CD8-positive, alpha-beta T cell (primary cell): ENCODE measurements at regions of chr19 and their contacts with region 1.

Region 1: DNA sequence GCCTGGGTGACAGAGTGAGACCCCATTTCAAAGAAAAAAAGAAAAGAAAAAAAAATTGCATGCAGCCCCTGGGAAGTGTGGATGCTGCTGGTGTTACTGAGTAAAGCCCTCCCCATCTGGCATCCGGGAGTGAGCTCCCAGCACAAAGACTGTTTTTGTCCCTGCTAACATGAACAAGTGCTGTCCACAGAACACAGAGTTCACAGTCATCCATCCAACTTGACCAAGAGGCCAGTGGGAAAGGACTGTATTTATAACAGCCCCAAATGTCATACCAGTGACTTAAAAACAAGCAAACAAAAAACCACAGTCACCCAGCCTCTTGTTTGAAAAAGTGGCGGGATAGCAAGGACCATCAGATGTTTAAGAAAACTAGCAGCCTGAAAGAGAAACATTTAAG is 10.8 kb downstream of the FBXO17 start:
- DNase-seq: no peak
- ATAC-seq: no peak
- H3K4me3 ChIP-seq: no peak overlapping the region
- H3K4me3 Mint-ChIP-seq: no peak overlapping the region
- H3K27ac ChIP-seq: no peak overlapping the region
- H3K27ac Mint-ChIP-seq: no peak overlapping the region
- H3K4me1 ChIP-seq: peaks cover 4% of the 10 kb centered on the region
- H3K4me1 Mint-ChIP-seq: peaks cover 5% of the 10 kb centered on the region
- H3K27me3 ChIP-seq: no peaks in the 10 kb centered on the region
- H3K27me3 Mint-ChIP-seq: peaks cover 17% of the 10 kb centered on the region
- CTCF ChIP-seq: no peak

Region 2: GRCh38 chr19:38949580-38950367 is 15.0 kb before region 1 on chr19:
- CTCF ChIA-PET with region 1: interaction called, 13 read pairs
- POLR2A ChIA-PET with region 1: no interaction called
- intact Hi-C with region 1: no loop called
- DNase-seq: peak; percentile 42 to 88 (median 80)
- ATAC-seq: peak; percentile 98
- H3K4me3 ChIP-seq: peak overlapping the region in 1 of 2 experiments; percentile 41
- H3K4me3 Mint-ChIP-seq: peak overlapping the region; percentile 64
- H3K27ac ChIP-seq: no peak overlapping the region
- H3K27ac Mint-ChIP-seq: peak overlapping the region; percentile 74
- H3K4me1 ChIP-seq: peaks cover 8% of the 10 kb centered on the region
- H3K4me1 Mint-ChIP-seq: peaks cover 14% of the 10 kb centered on the region
- H3K27me3 ChIP-seq: peaks cover 0 to 2% of the 10 kb centered on the region in 2 experiments
- H3K27me3 Mint-ChIP-seq: peaks cover 25% of the 10 kb centered on the region
- CTCF ChIP-seq: no peak

Region 3: DNA sequence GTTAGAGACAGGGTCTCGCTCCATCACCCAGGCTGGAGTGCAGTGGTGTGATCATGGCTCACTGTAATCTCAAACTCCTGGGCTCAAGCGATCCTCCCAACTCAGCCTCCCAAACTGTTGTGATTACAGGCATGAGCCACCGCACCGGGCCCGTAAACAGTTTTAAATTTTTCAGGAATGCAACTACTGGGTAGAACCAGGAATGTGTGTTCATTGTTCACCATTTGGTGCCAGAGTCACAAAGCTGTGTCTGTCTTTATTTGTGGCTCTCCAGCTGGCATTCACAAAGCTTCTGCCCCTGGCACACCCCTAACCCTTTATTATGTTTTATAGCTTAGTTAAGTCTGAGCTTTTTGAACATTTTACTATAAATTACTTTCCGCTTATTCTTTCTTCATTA is 99.7 kb after region 1 on chr19:
- CTCF ChIA-PET with region 1: no interaction called
- POLR2A ChIA-PET with region 1: no interaction called
- intact Hi-C with region 1: no loop called
- DNase-seq: no peak
- ATAC-seq: no peak
- H3K4me3 ChIP-seq: no peak overlapping the region
- H3K4me3 Mint-ChIP-seq: no peak overlapping the region
- H3K27ac ChIP-seq: no peak overlapping the region
- H3K27ac Mint-ChIP-seq: no peak overlapping the region
- H3K4me1 ChIP-seq: no peaks in the 10 kb centered on the region
- H3K4me1 Mint-ChIP-seq: peaks cover 6% of the 10 kb centered on the region
- H3K27me3 ChIP-seq: no peaks in the 10 kb centered on the region
- H3K27me3 Mint-ChIP-seq: peaks cover 6% of the 10 kb centered on the region
- CTCF ChIP-seq: no peak

Region 4: GRCh38 chr19:39187559-39187957 is 222.8 kb after region 1 on chr19:
- CTCF ChIA-PET with region 1: no interaction called
- POLR2A ChIA-PET with region 1: no interaction called
- intact Hi-C with region 1: loop called in 1 of 2 experiments (anchors 10 kb)
- DNase-seq: no peak
- ATAC-seq: no peak
- H3K4me3 ChIP-seq: no peak overlapping the region
- H3K4me3 Mint-ChIP-seq: no peak overlapping the region
- H3K27ac ChIP-seq: no peak overlapping the region
- H3K27ac Mint-ChIP-seq: no peak overlapping the region
- H3K4me1 ChIP-seq: no peaks in the 10 kb centered on the region
- H3K4me1 Mint-ChIP-seq: no peaks in the 10 kb centered on the region
- H3K27me3 ChIP-seq: peaks cover 0 to 6% of the 10 kb centered on the region in 2 experiments
- H3K27me3 Mint-ChIP-seq: peaks cover 20% of the 10 kb centered on the region
- CTCF ChIP-seq: no peak